BJ (cell line): ENCODE measurements at regions of chr17 and their contacts with region 1.

Region 1: DNA sequence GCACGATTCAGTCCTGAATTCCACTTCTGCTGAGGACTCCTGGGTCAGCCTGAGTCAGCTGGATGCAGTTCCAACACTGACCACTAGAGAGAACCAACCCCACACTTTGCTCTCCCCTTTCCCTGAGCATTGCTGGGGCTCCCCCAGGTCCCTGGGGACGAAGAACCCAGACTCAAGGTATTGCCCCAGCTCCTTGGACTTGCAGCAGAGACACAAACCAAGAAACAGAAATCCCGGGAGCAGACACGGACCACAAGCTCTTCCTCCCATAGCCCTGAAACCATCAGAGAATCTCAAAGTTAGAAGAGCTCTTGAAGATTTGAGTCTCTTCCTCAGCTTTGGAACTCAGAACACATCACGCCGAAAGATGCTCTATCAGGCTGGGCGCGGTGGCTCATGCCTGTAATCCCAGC is 678 bp upstream of the GH1 start:
- DNase-seq: no peak
- H3K4me3 ChIP-seq: no peak overlapping the region
- H3K27me3 ChIP-seq: peaks cover 4% of the 10 kb centered on the region; the same call in 1 of the 2 replicates
- CTCF ChIP-seq: peak; percentile 92

Region 2: DNA sequence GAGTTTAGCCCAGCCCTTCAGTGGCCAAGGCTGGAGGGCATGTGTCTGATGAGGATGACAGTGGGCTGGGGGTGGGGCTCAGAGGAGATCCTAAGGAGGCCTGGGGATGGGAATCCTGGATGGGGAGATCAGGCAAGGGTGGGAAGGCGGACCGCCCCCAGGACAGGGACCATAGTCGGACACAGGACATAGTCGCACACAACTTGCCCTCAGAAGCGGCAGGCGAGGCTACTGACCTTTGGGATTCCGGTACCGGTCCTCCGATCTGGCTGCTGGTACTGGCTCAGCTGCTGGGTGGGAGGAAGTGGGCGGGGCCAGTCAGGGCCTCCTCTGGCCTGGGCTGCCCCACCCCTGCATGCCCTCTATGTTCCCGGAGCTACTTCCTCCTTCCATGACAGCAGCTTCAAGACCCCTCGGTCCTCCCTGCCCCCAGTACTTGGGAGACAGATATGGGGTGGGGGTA is 11.8 kb after region 1 on chr17:
- CTCF ChIA-PET with region 1: interaction called, 84 read pairs
- POLR2A ChIA-PET with region 1: no interaction called
- DNase-seq: no peak
- H3K4me3 ChIP-seq: no peak overlapping the region
- H3K27me3 ChIP-seq: peaks cover 10% of the 10 kb centered on the region
- CTCF ChIP-seq: no peak

Region 3: GRCh38 chr17:63946440-63947367 is 27.4 kb after region 1 on chr17:
- CTCF ChIA-PET with region 1: interaction called, 42 read pairs
- POLR2A ChIA-PET with region 1: no interaction called
- DNase-seq: no peak
- H3K4me3 ChIP-seq: no peak overlapping the region
- H3K27me3 ChIP-seq: peaks cover 1% of the 10 kb centered on the region; the same call in 1 of the 2 replicates
- CTCF ChIP-seq: peak; percentile 82

Region 4: GRCh38 chr17:64005734-64006167 is 86.4 kb after region 1 on chr17:
- CTCF ChIA-PET with region 1: interaction called, 18 read pairs
- POLR2A ChIA-PET with region 1: interaction called, 5 read pairs
- DNase-seq: no peak
- H3K4me3 ChIP-seq: no peak overlapping the region
- H3K27me3 ChIP-seq: no peaks in the 10 kb centered on the region
- CTCF ChIP-seq: no peak

Region 5: GRCh38 chr17:64129764-64130558 is 210.6 kb after region 1 on chr17 and contains the start of gene ERN1:
- CTCF ChIA-PET with region 1: interaction called, 50 read pairs
- POLR2A ChIA-PET with region 1: no interaction called
- DNase-seq: no peak
- H3K4me3 ChIP-seq: peak within 1 kb of the TSS; percentile 69
- H3K27me3 ChIP-seq: no peaks in the 10 kb centered on the region
- CTCF ChIP-seq: no peak
- polyA plus RNA-seq, gene ERN1: 8.5 and 8.6 TPM in 2 replicates